GM13977 (cell line): ENCODE measurements at regions of chrX and their contacts with region 1.

Region 1: DNA sequence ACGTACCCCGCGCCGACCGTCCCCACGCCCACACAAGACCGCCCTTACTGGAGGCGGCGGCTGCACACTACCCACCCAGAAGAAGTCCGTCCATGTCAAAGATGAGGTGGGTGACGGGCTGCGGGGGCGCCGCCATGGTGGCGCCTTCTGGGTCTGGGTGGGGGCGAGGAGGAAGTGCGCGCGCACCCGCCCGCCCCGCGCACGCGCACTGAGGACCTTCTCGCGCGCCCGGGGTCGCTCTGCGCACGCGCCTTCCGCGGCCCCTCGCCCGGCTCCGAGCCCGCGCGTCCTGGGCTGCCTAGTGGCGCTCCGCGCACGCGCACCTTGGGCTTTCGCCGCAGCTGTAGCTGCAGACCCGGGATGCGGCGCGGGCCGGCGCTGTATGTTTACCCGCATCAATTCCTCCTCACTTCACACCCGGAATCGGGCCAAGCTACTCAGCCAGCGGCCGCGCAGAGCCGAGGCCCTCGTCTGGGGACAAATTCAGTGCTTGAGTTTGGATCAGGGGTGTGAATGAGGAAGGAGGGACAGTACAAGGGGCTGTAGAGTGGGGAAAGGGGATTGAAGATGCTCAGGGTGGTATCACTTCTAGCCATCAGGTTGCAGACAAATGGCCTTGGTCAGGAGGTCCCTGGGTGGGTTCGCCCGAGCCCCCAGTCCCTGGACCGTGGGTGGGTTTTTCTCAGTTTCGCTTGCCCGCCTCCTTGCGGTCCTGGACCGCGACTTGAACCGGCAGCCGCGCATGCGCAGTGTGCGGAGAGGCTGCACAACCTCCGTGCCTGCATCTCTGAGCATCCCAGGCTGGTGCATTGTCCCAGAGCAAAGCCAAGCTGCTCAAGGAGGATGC is at the start of gene PUDP:
- DNase-seq: peak; percentile 98
- CTCF ChIP-seq: peak; percentile 27

Region 2: DNA sequence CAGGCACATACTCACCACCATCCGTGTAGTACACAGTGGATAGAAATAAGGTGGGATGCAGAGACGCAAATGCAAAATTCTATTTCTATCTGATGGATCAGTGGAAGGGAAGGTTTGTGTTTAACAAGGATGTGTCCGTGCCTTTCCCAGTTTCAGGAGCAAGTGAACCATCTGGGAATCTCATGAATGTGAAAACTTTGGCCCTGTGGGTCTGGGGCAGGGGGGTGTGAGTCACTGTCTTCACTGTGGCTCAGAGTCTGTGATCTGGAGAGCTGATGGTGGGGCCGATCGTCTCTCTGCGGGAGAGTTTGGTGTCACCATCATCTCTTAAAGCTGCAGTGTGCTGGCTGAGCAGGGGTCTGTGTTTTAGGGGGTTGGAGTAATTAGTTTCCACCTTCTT is 180.0 kb before region 1 on chrX:
- in situ Hi-C with region 1: no loop called
- DNase-seq: no peak
- CTCF ChIP-seq: no peak

Region 3: DNA sequence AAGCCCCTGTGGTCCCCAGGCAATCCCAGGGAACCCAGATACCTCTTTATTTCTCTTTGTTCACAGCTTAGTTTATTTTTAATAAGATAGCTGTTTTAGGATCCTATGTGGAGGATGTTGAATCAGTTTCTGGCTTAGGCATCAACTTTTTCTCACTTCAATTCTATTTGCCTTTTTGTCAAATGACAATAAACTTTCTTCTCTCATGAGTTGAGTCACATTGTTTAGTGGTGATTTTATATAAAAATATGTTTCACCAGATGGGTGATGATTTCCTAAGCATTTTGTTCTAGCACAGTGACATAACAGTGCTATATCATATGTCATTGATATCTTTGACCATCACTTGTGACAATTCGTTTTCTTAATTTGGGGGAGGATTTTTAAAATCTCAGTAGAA is 197.8 kb after region 1 on chrX:
- in situ Hi-C with region 1: no loop called
- DNase-seq: no peak
- CTCF ChIP-seq: no peak

Region 4: GRCh38 chrX:7586126-7586525 is 437.9 kb after region 1 on chrX:
- in situ Hi-C with region 1: loop called (anchors 25 kb)
- DNase-seq: peak; percentile 44
- CTCF ChIP-seq: peak; percentile 73